HepG2 (cell line): ENCODE measurements at regions of chr1 and their contacts with region 1.

Region 1: DNA sequence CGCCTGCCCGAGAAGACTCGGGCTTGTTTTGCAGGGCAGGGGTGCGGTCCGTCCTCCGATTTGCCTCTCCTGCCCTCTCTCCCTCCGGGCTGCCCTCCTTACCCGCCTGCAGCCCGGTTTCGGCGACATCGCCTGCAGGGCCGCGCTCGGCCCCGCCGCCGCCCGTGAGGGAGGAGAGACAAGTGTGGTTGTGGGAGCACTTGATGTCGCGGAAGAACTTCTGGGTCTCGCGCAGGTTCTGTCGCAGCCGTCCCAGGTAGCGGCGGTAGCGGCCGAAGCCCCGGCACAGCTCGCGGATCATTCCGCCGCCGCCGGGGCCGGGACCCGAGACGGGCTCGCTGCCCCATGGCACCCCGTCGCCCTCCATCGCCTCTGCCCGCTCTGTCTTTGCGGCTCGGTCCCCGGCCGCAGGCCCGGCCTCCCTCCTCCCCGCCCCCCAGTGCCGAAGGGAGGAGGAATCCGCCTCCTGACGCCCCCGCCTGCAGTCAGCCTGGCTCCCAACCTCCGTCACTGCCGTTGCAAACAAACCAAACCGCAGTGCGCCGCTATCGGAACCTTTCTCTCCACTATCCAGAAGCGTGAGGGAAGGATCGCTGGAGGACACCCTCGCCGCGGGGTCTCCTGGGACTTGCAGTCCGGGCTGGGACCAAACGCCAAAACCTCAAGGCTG is at the start of gene DSTYK:
- DNase-seq: peak; percentile 85
- ATAC-seq: peak; percentile 94
- H3K4me3 ChIP-seq: peak within 1 kb of the TSS; percentile 89 to 100 (median 95)
- H3K27ac ChIP-seq: peak within 1 kb of the TSS; percentile 90
- H3K4me1 ChIP-seq: peaks cover 17% of the 10 kb centered on the region
- H3K27me3 ChIP-seq: peaks cover 0 to 4% of the 10 kb centered on the region in 2 experiments; a peak in 1 of 5 replicates
- CTCF ChIP-seq: peak; percentile 45
- EP300 ChIP-seq: no peak
- POLR2A ChIP-seq: peak; percentile 82 to 84
- RAD21 ChIP-seq: peak; percentile 63
- total RNA-seq, gene DSTYK: 4.8 and 6.1 TPM in 2 replicates

Region 2: DNA sequence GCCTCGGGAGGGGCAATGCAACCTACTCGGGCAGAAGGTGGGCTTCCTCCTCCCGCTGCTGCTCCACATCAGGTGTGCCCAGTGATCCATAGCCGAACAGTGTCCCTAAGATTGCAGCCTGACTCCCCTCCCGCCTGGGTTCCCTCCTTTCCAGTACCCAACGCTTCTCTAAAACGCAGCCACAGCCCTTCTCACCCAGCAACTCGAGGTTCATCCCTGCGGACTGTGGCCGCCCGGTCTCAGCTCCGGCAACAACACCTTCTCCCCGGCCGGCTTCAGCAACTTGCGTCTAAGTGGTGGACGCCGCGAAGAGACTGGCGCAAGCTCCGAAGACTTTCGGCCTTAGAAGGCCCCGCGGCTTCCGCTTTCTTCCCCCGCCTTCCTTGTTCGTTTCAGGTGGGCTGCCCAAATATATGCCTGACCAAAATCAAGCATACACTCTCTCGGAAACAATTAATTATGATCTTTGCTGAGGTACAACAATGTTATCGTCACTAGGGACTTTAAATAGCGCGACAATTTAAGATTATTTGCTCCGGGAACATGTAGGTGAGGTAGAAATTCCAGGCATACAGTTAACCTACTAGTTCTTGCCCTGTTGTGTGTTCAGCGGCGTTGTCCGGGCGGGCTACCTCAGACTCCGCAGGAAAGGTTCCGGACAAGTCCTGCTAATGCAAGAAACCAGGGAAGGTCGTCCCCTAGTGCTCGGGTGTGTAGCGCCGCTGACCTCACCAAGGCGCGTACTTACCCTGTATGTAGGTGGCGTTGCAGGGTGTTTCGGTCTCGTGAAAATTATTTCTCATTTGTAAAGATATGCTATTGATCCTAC is 89.4 kb before region 1 on chr1 and contains the start of gene RBBP5:
- CTCF ChIA-PET with region 1: no interaction called
- POLR2A ChIA-PET with region 1: interaction called, 4 read pairs
- in situ Hi-C with region 1: no loop called
- intact Hi-C with region 1: loop called (anchors 1 kb)
- DNase-seq: peak; percentile 94
- ATAC-seq: peak; percentile 99
- H3K4me3 ChIP-seq: peak within 1 kb of the TSS; percentile 85 to 95 (median 85)
- H3K27ac ChIP-seq: peak within 1 kb of the TSS; percentile 94
- H3K4me1 ChIP-seq: peaks cover 31% of the 10 kb centered on the region
- H3K27me3 ChIP-seq: no peaks in the 10 kb centered on the region; a peak in 1 of 5 replicates
- CTCF ChIP-seq: peak; percentile 92
- EP300 ChIP-seq: peak; percentile 50 to 53; a peak in 2 of 4 replicates
- POLR2A ChIP-seq: peak; percentile 86 to 89
- RAD21 ChIP-seq: peak; percentile 64
- total RNA-seq, gene RBBP5: 17.1 and 26.2 TPM in 2 replicates

Region 3: GRCh38 chr1:205689479-205689878 is 478.2 kb after region 1 on chr1:
- CTCF ChIA-PET with region 1: no interaction called
- POLR2A ChIA-PET with region 1: no interaction called
- in situ Hi-C with region 1: no loop called
- intact Hi-C with region 1: no loop called
- DNase-seq: no peak
- ATAC-seq: no peak
- H3K4me3 ChIP-seq: no peak overlapping the region
- H3K27ac ChIP-seq: no peak overlapping the region
- H3K4me1 ChIP-seq: peaks cover 64% of the 10 kb centered on the region
- H3K27me3 ChIP-seq: peaks cover 2 to 13% of the 10 kb centered on the region in 2 experiments; a peak in 2 of 5 replicates
- CTCF ChIP-seq: no peak
- EP300 ChIP-seq: no peak
- POLR2A ChIP-seq: no peak
- RAD21 ChIP-seq: no peak